CD14-positive monocyte (primary cell): ENCODE measurements at regions of chr2 and their contacts with region 1.

Region 1: GRCh38 chr2:235116885-235117492 is 165.2 kb downstream of the SH3BP4 start:
- DNase-seq: peak in 1 of 3 donors; percentile 20
- H3K4me3 ChIP-seq: no peak overlapping the region
- H3K4me3 Mint-ChIP-seq: no peak overlapping the region
- H3K27ac ChIP-seq: no peak overlapping the region
- H3K27ac Mint-ChIP-seq: no peak overlapping the region
- H3K4me1 ChIP-seq: no peaks in the 10 kb centered on the region
- H3K4me1 Mint-ChIP-seq: no peaks in the 10 kb centered on the region
- H3K27me3 ChIP-seq: peaks cover 0 to 2% of the 10 kb centered on the region in 2 donors
- H3K27me3 Mint-ChIP-seq: peaks cover 2 to 15% (median 3%) of the 10 kb centered on the region in 3 donors
- CTCF ChIP-seq: peak; percentile 70

Region 2: DNA sequence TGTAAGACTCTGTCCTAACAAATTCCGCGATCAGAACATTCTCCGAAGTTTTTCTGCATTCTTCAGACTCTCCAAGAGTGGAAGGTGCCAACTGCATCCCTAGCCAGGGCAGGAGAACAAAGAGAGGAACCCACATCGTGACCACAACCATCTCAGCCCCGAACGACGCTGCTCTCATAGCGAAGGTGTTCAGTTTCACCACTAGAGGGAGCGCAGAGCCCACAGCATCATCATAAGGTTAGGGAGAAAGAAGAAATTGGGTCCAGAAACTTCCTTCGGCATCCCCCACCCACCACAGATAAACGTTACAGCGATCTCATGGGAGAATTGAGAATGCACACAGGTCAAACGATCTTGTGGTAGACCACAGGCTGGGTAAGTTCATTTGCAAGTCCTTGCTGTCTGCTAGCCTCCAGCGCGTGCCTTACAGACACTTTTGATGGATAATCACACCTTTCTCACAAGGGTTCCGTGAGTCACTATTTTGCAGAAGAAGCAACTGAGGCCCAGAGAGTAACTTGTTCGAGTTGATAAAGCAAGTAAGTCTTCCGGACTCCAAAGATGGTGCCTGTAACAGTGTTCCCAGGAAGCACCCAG is 566.4 kb before region 1 on chr2:
- intact Hi-C with region 1: loop called (anchors 2 to 5 kb)
- DNase-seq: peak; percentile 51 to 63 (median 58)
- H3K4me3 ChIP-seq: no peak overlapping the region
- H3K4me3 Mint-ChIP-seq: peak overlapping the region in 1 of 2 donors; percentile 32
- H3K27ac ChIP-seq: no peak overlapping the region
- H3K27ac Mint-ChIP-seq: no peak overlapping the region
- H3K4me1 ChIP-seq: no peaks in the 10 kb centered on the region
- H3K4me1 Mint-ChIP-seq: no peaks in the 10 kb centered on the region
- H3K27me3 ChIP-seq: no peaks in the 10 kb centered on the region
- H3K27me3 Mint-ChIP-seq: peaks cover 5 to 10% (median 5%) of the 10 kb centered on the region in 3 donors
- CTCF ChIP-seq: peak; percentile 91